ENCODE measurements at regions of chr11 and their contacts with region 1.

Region 1: DNA sequence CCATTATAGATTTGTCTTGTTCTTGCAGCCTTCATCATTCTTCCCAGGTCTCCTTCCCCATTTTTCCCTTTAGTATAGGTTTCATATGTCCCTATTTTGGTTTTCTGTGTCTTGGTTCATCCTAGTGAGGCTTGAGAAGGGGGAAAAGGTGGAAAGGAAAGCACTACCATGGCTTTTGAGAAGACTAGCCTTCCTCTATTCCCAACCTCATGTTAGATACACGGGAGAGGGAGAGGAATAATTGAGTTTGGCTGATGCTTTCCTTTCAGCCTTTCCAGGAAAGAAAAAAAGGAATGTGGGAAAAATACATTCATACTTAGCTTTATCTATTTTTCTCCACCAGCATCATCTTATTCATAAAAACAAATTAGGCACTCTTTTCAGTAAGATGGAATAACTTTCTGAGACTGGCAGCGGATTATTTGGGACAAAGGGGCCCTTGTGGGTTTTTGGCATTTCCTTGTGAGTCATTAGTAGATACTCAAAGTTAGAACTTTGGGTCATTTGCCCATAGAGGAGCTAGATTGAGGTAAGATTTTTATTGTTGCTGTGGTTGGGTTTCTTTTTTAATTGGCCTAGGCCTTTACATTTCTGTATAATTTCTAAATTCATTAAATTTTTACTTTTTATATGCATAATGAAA is 23.8 kb downstream of the CAPRIN1 start:
- DNase-seq: no peak
- ATAC-seq: no peak
- H3K4me3 ChIP-seq: no peak overlapping the region
- H3K4me3 Mint-ChIP-seq: no peak overlapping the region
- H3K27ac ChIP-seq: peak overlapping the region in 1 of 2 experiments; percentile 30
- H3K27ac Mint-ChIP-seq: peak overlapping the region; percentile 24
- H3K4me1 ChIP-seq: peaks cover 14% of the 10 kb centered on the region
- H3K4me1 Mint-ChIP-seq: peaks cover 50% of the 10 kb centered on the region
- H3K27me3 ChIP-seq: no peaks in the 10 kb centered on the region
- H3K27me3 Mint-ChIP-seq: no peaks in the 10 kb centered on the region
- CTCF ChIP-seq: no peak

Region 2: GRCh38 chr11:34056672-34057071 is 18.6 kb before region 1 on chr11:
- CTCF ChIA-PET with region 1: interaction called, 4 read pairs
- POLR2A ChIA-PET with region 1: interaction called, 4 read pairs
- intact Hi-C with region 1: loop called in 1 of 2 experiments (anchors 2 kb)
- DNase-seq: no peak
- ATAC-seq: no peak
- H3K4me3 ChIP-seq: no peak overlapping the region
- H3K4me3 Mint-ChIP-seq: no peak overlapping the region
- H3K27ac ChIP-seq: no peak overlapping the region
- H3K27ac Mint-ChIP-seq: peak overlapping the region; percentile 5
- H3K4me1 ChIP-seq: peaks cover 62% of the 10 kb centered on the region
- H3K4me1 Mint-ChIP-seq: peaks cover 56% of the 10 kb centered on the region
- H3K27me3 ChIP-seq: no peaks in the 10 kb centered on the region
- H3K27me3 Mint-ChIP-seq: no peaks in the 10 kb centered on the region
- CTCF ChIP-seq: no peak

Region 3: DNA sequence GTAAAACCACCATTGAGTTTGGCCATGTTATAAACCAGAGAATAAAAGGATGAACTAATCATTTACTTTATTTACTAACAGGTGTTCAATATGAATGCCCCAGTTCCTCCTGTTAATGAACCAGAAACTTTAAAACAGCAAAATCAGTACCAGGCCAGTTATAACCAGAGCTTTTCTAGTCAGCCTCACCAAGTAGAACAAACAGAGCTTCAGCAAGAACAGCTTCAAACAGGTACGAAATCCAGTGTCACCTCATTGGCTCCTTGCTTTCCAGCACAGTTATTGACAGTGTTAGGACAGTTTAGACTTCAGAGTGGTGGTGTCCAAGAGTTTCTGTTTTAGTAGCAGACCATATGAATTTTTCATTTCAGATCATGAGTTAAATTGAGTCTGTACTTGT is 16.5 kb after region 1 on chr11:
- CTCF ChIA-PET with region 1: interaction called, 5 read pairs
- POLR2A ChIA-PET with region 1: no interaction called
- intact Hi-C with region 1: loop called in 1 of 2 experiments (anchors 2 kb)
- DNase-seq: no peak
- ATAC-seq: no peak
- H3K4me3 ChIP-seq: no peak overlapping the region
- H3K4me3 Mint-ChIP-seq: no peak overlapping the region
- H3K27ac ChIP-seq: no peak overlapping the region
- H3K27ac Mint-ChIP-seq: no peak overlapping the region
- H3K4me1 ChIP-seq: no peaks in the 10 kb centered on the region
- H3K4me1 Mint-ChIP-seq: peaks cover 3% of the 10 kb centered on the region
- H3K27me3 ChIP-seq: no peaks in the 10 kb centered on the region
- H3K27me3 Mint-ChIP-seq: no peaks in the 10 kb centered on the region
- CTCF ChIP-seq: no peak

Region 4: DNA sequence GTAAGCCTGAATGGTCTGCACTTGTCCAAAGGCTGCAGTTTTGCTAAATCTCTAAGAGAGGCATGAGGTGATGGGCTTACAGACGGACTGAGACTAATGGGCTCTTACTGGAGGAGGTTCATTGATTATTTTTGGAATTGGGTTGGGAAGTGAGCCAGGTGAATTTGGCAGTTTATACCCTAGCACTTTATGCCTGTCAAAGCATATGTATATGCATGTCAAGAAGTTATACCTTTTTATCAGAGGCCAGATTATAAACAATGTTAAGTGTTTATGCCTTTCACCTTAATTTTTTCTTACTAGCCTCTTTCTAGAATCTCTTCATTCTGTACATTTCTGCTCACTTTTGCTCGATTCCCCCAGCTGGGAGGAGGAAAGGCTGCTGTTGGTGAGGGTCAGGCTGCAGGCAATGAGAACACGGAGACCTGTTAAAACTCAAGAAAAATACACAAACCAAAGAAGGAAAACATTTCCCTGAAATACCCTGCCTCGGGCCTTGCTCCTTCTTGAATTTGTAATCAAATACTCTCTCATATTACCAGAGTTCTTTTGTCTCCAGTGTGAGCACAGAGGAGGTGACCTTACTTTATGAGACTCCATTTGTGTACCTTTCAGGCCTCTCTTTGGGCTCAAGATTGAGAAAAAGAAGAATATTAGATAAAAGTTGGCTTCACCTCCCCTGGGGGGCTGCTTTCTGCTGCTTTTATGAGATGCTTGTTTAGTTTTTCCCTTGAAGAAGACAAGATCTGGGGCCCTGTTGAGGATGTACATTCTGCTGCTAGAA is 49.8 kb after region 1 on chr11:
- CTCF ChIA-PET with region 1: no interaction called
- POLR2A ChIA-PET with region 1: no interaction called
- intact Hi-C with region 1: loop called in 1 of 2 experiments (anchors 1 kb)
- DNase-seq: no peak
- ATAC-seq: no peak
- H3K4me3 ChIP-seq: no peak overlapping the region
- H3K4me3 Mint-ChIP-seq: no peak overlapping the region
- H3K27ac ChIP-seq: no peak overlapping the region
- H3K27ac Mint-ChIP-seq: no peak overlapping the region
- H3K4me1 ChIP-seq: no peaks in the 10 kb centered on the region
- H3K4me1 Mint-ChIP-seq: no peaks in the 10 kb centered on the region
- H3K27me3 ChIP-seq: no peaks in the 10 kb centered on the region
- H3K27me3 Mint-ChIP-seq: no peaks in the 10 kb centered on the region
- CTCF ChIP-seq: no peak

Region 5: DNA sequence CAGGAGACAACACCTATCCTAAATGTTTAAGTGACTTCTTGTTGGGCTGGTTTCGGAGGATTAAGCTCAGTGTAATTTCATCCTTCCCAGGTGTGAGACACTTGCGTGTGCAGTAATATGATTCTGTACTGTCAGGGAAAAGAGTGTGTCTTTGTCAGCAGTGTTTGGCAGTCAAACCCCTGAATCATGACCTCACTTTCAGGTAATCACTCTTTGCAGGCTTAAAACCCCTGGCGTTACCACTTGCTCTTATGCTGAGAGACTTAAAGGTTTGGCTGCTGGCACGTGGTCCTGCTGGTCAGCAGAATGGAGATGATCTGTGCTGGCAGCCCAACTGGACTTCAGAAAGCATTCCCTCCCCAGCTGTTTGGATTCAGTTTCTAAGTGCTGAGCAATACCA is 784.7 kb after region 1 on chr11:
- CTCF ChIA-PET with region 1: no interaction called
- POLR2A ChIA-PET with region 1: no interaction called
- intact Hi-C with region 1: no loop called
- DNase-seq: no peak
- ATAC-seq: no peak
- H3K4me3 ChIP-seq: no peak overlapping the region
- H3K4me3 Mint-ChIP-seq: no peak overlapping the region
- H3K27ac ChIP-seq: no peak overlapping the region
- H3K27ac Mint-ChIP-seq: no peak overlapping the region
- H3K4me1 ChIP-seq: no peaks in the 10 kb centered on the region
- H3K4me1 Mint-ChIP-seq: no peaks in the 10 kb centered on the region
- H3K27me3 ChIP-seq: no peaks in the 10 kb centered on the region
- H3K27me3 Mint-ChIP-seq: no peaks in the 10 kb centered on the region
- CTCF ChIP-seq: no peak

Measured in CD8-positive, alpha-beta T cell (primary cell).